Adrenal gland (tissue), 19 donors: ENCODE measurements at regions of chr2 and their contacts with region 1.

Region 1: GRCh38 chr2:158968396-158969161 is at the start of gene TANC1:
- DNase-seq: peak; percentile 93 to 97 (median 96)
- H3K4me3 ChIP-seq: peak within 1 kb of the TSS; percentile 54 to 94 (median 76)
- H3K27ac ChIP-seq: peak within 1 kb of the TSS; percentile 43 to 93 (median 73)
- H3K4me1 ChIP-seq: peaks cover 9 to 43% of the 10 kb centered on the region in 2 donors
- H3K27me3 ChIP-seq: no peaks in the 10 kb centered on the region
- CTCF ChIP-seq: no peak
- POLR2A ChIP-seq: peak; percentile 87 to 96
- total RNA-seq, gene TANC1: 14.1 to 53.3 (median 28.1) TPM

Region 2: GRCh38 chr2:159030674-159031380 is 62.2 kb after region 1 on chr2:
- intact Hi-C with region 1: loop called in 1 of 2 experiments (anchors 2 kb)
- DNase-seq: peak; percentile 53 to 88 (median 75)
- H3K4me3 ChIP-seq: no peak overlapping the region
- H3K27ac ChIP-seq: peak overlapping the region in 4 of 5 donors; percentile 46 to 89 (median 75)
- H3K4me1 ChIP-seq: peaks cover 31 to 56% of the 10 kb centered on the region in 2 donors
- H3K27me3 ChIP-seq: no peaks in the 10 kb centered on the region
- CTCF ChIP-seq: no peak
- POLR2A ChIP-seq: no peak

Region 3: DNA sequence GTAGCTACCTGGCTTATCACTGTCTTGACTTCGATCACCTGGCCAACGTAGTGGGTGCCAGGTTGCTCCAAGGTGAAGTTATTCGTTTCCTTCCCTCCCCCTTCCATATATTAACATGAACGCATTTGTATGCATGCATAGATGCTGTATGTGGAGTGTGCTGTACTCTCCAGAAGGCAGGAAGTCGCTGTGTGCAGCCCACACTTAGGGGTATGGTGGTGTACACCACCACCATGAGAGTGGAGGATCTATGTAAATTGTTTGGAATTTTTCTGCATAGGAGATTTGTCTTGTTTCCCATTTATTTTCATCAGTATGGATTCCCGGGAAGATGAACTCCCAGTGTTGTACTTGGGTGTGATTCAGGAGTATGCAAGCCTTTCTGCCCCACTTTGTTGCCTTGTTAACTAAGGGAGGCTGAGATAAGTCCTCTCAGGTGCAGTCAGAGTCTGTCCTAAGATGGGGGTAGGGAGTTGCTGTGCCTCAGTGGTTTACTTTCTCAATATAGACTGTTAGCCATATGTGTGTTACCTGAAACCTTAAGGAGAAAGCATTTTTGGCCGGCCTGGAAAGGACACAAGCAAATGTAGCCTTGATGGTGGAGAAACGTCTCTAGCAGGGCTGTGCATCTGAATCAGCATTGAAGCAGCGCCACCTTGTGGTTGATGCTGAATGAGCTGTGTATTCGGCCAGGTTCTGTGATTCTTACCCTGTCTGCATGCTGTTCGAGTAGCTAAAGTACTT is 149.7 kb after region 1 on chr2:
- intact Hi-C with region 1: loop called in 1 of 2 experiments (anchors 10 kb)
- DNase-seq: peak; percentile 80 to 98 (median 90)
- H3K4me3 ChIP-seq: no peak overlapping the region
- H3K27ac ChIP-seq: no peak overlapping the region
- H3K4me1 ChIP-seq: peaks cover 0 to 9% of the 10 kb centered on the region in 2 donors
- H3K27me3 ChIP-seq: no peaks in the 10 kb centered on the region
- CTCF ChIP-seq: peak; percentile 91 to 96 (median 94)
- POLR2A ChIP-seq: no peak

Region 4: GRCh38 chr2:159211447-159212396 is 243.1 kb after region 1 on chr2:
- intact Hi-C with region 1: no loop called
- DNase-seq: peak in 1 of 7 donors; percentile 35
- H3K4me3 ChIP-seq: no peak overlapping the region
- H3K27ac ChIP-seq: no peak overlapping the region
- H3K4me1 ChIP-seq: no peaks in the 10 kb centered on the region
- H3K27me3 ChIP-seq: no peaks in the 10 kb centered on the region
- CTCF ChIP-seq: no peak
- POLR2A ChIP-seq: no peak

Region 5: GRCh38 chr2:159615140-159615951 is 646.8 kb after region 1 on chr2:
- intact Hi-C with region 1: no loop called
- DNase-seq: peak; percentile 92 to 97 (median 96)
- H3K4me3 ChIP-seq: peak overlapping the region; percentile 57 to 84 (median 76)
- H3K27ac ChIP-seq: peak overlapping the region; percentile 93 to 99 (median 97)
- H3K4me1 ChIP-seq: peaks cover 7 to 54% of the 10 kb centered on the region in 2 donors
- H3K27me3 ChIP-seq: no peaks in the 10 kb centered on the region
- CTCF ChIP-seq: no peak
- POLR2A ChIP-seq: peak; percentile 47 to 87